Activated CD4-positive, alpha-beta T cell treated with anti-CD3 and anti-CD28 coated beads for 36 hours (primary cell): ENCODE measurements at regions of chr7 and their contacts with region 1.

Region 1: GRCh38 chr7:96321658-96322372 is at the start of gene SLC25A13:
- DNase-seq: peak; percentile 80
- ATAC-seq: peak; percentile 59
- H3K4me3 Mint-ChIP-seq: peak within 1 kb of the TSS; percentile 77
- H3K27ac Mint-ChIP-seq: peak within 1 kb of the TSS; percentile 96
- H3K4me1 Mint-ChIP-seq: peaks cover 39% of the 10 kb centered on the region
- H3K27me3 Mint-ChIP-seq: no peaks in the 10 kb centered on the region
- total RNA-seq, gene SLC25A13: 10.3 to 11.3 TPM

Region 2: DNA sequence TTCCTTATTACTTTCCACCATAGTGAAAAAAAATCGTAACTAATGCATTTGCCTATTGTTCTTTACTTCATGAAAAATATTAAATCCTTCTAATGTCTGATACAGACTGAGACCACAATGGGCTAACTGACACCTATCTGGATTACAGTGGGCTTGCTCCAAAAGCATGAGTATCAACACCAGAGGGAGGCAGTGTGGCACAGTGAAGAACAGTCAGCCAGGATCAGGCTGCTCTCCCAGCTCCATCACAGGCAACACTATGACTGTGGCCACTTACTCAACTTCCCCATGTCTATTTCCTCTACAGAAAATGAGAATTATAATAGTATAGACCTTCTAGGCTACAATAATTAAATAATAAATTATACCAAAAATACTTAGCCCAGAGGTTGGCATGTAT is 97.1 kb before region 1 on chr7:
- CTCF ChIA-PET with region 1: no interaction called
- POLR2A ChIA-PET with region 1: no interaction called
- intact Hi-C with region 1: loop called in 1 of 2 experiments (anchors 10 kb)
- DNase-seq: peak; percentile 34
- ATAC-seq: peak; percentile 60
- H3K4me3 Mint-ChIP-seq: no peak overlapping the region
- H3K27ac Mint-ChIP-seq: no peak overlapping the region
- H3K4me1 Mint-ChIP-seq: peaks cover 8% of the 10 kb centered on the region
- H3K27me3 Mint-ChIP-seq: no peaks in the 10 kb centered on the region

Region 3: GRCh38 chr7:96303686-96304443 is 17.9 kb before region 1 on chr7:
- CTCF ChIA-PET with region 1: interaction called, 7 read pairs
- POLR2A ChIA-PET with region 1: interaction called, 3 read pairs
- intact Hi-C with region 1: loop called (anchors 1 kb)
- DNase-seq: no peak
- ATAC-seq: peak; percentile 91
- H3K4me3 Mint-ChIP-seq: no peak overlapping the region
- H3K27ac Mint-ChIP-seq: peak overlapping the region; percentile 80
- H3K4me1 Mint-ChIP-seq: peaks cover 58% of the 10 kb centered on the region
- H3K27me3 Mint-ChIP-seq: no peaks in the 10 kb centered on the region

Region 4: DNA sequence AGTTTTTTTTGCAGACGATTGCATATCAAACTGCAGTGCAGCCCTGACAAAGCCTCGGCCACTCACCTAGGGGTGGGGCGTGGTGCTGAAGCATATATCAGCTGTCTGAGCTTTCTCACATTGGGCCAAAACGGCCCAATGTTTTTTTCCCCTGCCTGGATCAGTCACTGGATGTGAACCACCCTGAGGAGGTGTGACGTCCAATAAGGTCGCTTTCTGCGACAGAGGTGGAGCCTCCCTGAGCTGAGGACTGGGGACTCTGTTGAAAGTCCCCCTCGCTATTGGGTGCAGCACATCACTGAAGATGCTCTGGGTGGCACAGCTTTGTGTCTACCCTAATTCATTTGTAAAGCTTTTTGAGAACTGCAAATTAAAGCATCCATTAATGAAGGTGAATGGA is 327.0 kb after region 1 on chr7:
- CTCF ChIA-PET with region 1: no interaction called
- POLR2A ChIA-PET with region 1: no interaction called
- intact Hi-C with region 1: no loop called
- DNase-seq: no peak
- ATAC-seq: no peak
- H3K4me3 Mint-ChIP-seq: no peak overlapping the region
- H3K27ac Mint-ChIP-seq: no peak overlapping the region
- H3K4me1 Mint-ChIP-seq: no peaks in the 10 kb centered on the region
- H3K27me3 Mint-ChIP-seq: no peaks in the 10 kb centered on the region

Region 5: GRCh38 chr7:96837593-96837992 is 515.8 kb after region 1 on chr7:
- CTCF ChIA-PET with region 1: no interaction called
- POLR2A ChIA-PET with region 1: no interaction called
- intact Hi-C with region 1: loop called in 1 of 2 experiments (anchors 1 kb)
- DNase-seq: peak; percentile 48
- ATAC-seq: peak; percentile 94
- H3K4me3 Mint-ChIP-seq: peak overlapping the region; percentile 4
- H3K27ac Mint-ChIP-seq: peak overlapping the region; percentile 61
- H3K4me1 Mint-ChIP-seq: peaks cover 34% of the 10 kb centered on the region
- H3K27me3 Mint-ChIP-seq: peaks cover 54% of the 10 kb centered on the region

Region 6: GRCh38 chr7:97872025-97872669 is 1550.3 kb after region 1 on chr7 and contains the start of gene ASNS:
- CTCF ChIA-PET with region 1: no interaction called
- POLR2A ChIA-PET with region 1: no interaction called
- intact Hi-C with region 1: loop called in 1 of 2 experiments (anchors 1 kb)
- DNase-seq: peak; percentile 96
- ATAC-seq: peak; percentile 96
- H3K4me3 Mint-ChIP-seq: peak within 1 kb of the TSS; percentile 92
- H3K27ac Mint-ChIP-seq: peak within 1 kb of the TSS; percentile 82
- H3K4me1 Mint-ChIP-seq: peaks cover 20% of the 10 kb centered on the region
- H3K27me3 Mint-ChIP-seq: no peaks in the 10 kb centered on the region
- total RNA-seq, gene ASNS: 228 to 247 TPM